Dendritic cell treated with granulocyte-macrophage colony-stimulating factor and Interleukin-4, amounts not matched to agents 40 ng/mL and 50 ng/mL, for 4 days (primary cell): ENCODE measurements at regions of chr9 and their contacts with region 1.

Region 1: GRCh38 chr9:91089405-91090129 is 272.2 kb downstream of the AUH start:
- H3K4me3 Mint-ChIP-seq: no peak overlapping the region
- H3K27ac Mint-ChIP-seq: peak overlapping the region; percentile 57
- H3K4me1 Mint-ChIP-seq: peaks cover 47% of the 10 kb centered on the region
- H3K27me3 Mint-ChIP-seq: peaks cover 8% of the 10 kb centered on the region

Region 2: DNA sequence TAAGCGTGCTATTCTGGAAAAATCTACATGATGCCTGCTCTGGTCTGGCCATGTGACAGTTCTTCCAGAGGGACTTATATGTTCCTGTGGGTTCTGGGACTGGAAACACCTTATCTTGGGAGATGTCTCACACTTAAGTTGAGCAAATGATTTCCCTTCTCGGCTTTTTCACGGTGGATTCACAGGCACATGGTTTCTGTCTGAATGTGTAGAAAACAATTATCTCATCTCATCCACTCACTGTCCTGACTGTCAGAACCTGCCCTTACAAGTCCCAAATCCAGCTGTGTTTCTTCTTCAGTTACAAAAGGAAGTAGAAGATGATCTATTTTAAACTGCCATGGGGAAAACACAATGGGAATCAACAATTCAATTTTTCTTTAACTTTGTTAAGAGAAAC is 103.9 kb before region 1 on chr9:
- intact Hi-C with region 1: no loop called
- H3K4me3 Mint-ChIP-seq: no peak overlapping the region
- H3K27ac Mint-ChIP-seq: no peak overlapping the region
- H3K4me1 Mint-ChIP-seq: no peaks in the 10 kb centered on the region
- H3K27me3 Mint-ChIP-seq: peaks cover 2% of the 10 kb centered on the region

Region 3: GRCh38 chr9:91001146-91001611 is 88.4 kb before region 1 on chr9:
- intact Hi-C with region 1: no loop called
- H3K4me3 Mint-ChIP-seq: no peak overlapping the region
- H3K27ac Mint-ChIP-seq: no peak overlapping the region
- H3K4me1 Mint-ChIP-seq: peaks cover 10% of the 10 kb centered on the region
- H3K27me3 Mint-ChIP-seq: no peaks in the 10 kb centered on the region

Region 4: GRCh38 chr9:91071185-91071990 is 18.2 kb before region 1 on chr9:
- intact Hi-C with region 1: no loop called
- H3K4me3 Mint-ChIP-seq: no peak overlapping the region
- H3K27ac Mint-ChIP-seq: peak overlapping the region; percentile 1
- H3K4me1 Mint-ChIP-seq: peaks cover 7% of the 10 kb centered on the region
- H3K27me3 Mint-ChIP-seq: peaks cover 2% of the 10 kb centered on the region

Region 5: DNA sequence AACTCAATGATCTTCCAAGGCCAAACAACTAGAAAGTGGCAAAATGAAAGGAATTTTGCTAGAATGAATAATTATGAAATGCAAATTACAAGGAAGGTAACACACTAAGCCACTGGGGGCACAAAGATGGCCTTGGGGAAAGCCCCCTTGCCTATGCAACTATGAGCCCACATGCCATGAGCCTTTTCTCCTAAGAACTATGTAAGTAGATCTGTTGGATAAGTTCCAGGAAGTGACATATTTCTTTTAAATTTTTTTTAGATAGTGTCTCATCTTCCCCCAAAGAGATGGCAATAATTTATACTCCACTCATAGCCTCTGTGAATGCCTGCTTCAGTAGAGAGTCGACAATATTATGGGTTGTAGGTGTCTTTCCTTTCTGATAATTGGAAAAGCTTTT is 14.4 kb after region 1 on chr9:
- intact Hi-C with region 1: no loop called
- H3K4me3 Mint-ChIP-seq: no peak overlapping the region
- H3K27ac Mint-ChIP-seq: no peak overlapping the region
- H3K4me1 Mint-ChIP-seq: peaks cover 33% of the 10 kb centered on the region
- H3K27me3 Mint-ChIP-seq: peaks cover 12% of the 10 kb centered on the region

Region 6: DNA sequence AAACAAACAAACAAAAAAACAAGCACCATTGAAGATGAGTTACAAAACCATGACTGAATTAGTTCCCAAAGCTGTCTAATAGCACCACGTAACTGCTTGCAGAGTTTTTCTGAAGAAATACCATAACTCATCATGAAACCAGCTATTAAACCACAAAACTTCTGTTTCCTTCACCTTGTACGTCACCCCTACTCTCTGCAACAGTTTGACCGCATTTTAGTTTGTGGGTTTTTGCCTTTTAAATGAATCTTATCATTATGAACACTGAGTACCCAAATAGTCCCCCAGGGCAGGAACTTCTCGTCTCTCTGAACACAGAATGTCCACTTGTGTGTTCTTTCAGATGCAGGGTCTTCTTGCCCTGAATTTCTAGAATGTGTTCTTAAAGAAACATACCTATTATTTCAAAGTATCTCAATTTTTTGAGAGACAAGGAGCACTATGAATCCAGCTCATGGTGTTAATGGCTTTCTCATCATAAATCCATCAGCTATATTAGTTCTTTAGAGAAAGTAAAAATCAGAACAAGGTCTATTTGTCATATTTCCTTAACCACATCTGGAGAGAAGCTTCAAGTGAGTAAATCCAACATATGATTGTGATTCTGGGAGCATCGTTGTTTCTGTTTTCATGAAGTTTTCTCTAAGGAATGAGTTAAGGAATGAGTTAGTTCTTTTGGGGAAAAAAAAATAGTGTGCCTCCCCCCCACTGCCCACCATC is 61.6 kb after region 1 on chr9:
- intact Hi-C with region 1: loop called (anchors 10 kb)
- H3K4me3 Mint-ChIP-seq: no peak overlapping the region
- H3K27ac Mint-ChIP-seq: peak overlapping the region; percentile 93
- H3K4me1 Mint-ChIP-seq: peaks cover 71% of the 10 kb centered on the region
- H3K27me3 Mint-ChIP-seq: no peaks in the 10 kb centered on the region